Natural killer cell (primary cell): ENCODE measurements at regions of chr2 and their contacts with region 1.

Region 1: DNA sequence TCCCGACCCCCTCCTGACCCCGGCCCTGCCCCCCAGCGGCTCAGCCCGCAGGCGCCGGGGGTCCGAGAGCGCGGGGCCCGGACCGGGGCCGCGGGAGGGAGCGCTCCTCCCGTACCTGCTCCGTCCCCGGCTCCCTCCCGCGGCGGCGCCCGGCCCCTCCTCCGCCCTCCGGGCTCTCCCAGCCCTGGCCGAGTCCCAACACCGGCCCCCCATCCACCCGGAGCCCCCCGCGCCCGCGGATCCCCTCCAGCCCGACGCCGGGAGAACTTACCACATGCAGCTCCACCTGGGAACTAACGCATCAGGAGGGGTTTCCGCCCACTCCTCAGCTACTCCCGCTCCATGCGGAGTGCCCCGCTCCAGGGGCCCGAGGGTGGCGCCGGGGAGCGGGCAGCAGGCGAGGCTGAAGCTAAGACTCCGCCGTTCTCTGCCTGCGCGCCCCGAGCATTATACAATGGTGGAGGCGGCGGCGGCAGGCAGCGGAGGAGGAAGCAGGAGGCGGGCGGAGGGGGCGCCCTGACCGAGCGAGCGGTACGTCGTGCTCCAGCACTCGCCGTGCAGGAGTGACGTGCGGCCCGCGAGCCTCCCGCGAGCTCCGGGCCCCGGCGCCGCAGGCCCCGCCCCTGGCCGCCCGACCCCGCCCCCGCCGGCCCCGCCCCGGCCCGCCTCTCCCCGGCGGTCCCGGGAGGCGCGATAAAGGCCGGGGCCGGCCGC is at the start of gene SERTAD2:
- DNase-seq: peak; percentile 80 to 94
- ATAC-seq: peak; percentile 81 to 93 (median 87)
- H3K4me3 ChIP-seq: peak within 1 kb of the TSS; percentile 99
- H3K4me3 Mint-ChIP-seq: peak within 1 kb of the TSS; percentile 93
- H3K27ac ChIP-seq: peak within 1 kb of the TSS; percentile 98
- H3K27ac Mint-ChIP-seq: peak within 1 kb of the TSS; percentile 85 to 87
- H3K4me1 ChIP-seq: peaks cover 28% of the 10 kb centered on the region
- H3K4me1 Mint-ChIP-seq: peaks cover 34 to 40% of the 10 kb centered on the region in 2 donors
- H3K27me3 ChIP-seq: no peaks in the 10 kb centered on the region
- H3K27me3 Mint-ChIP-seq: no peaks in the 10 kb centered on the region
- CTCF ChIP-seq: no peak
- total RNA-seq, gene SERTAD2: 45.6 to 71.2 (median 55.8) TPM

Region 2: GRCh38 chr2:64354857-64355680 is 298.4 kb before region 1 on chr2:
- intact Hi-C with region 1: no loop called
- DNase-seq: no peak
- ATAC-seq: no peak
- H3K4me3 ChIP-seq: no peak overlapping the region
- H3K4me3 Mint-ChIP-seq: no peak overlapping the region
- H3K27ac ChIP-seq: no peak overlapping the region
- H3K27ac Mint-ChIP-seq: no peak overlapping the region
- H3K4me1 ChIP-seq: no peaks in the 10 kb centered on the region
- H3K4me1 Mint-ChIP-seq: no peaks in the 10 kb centered on the region
- H3K27me3 ChIP-seq: peaks cover 3% of the 10 kb centered on the region
- H3K27me3 Mint-ChIP-seq: peaks cover 23 to 41% of the 10 kb centered on the region in 2 donors
- CTCF ChIP-seq: no peak

Region 3: GRCh38 chr2:64609227-64609941 is 44.1 kb before region 1 on chr2:
- intact Hi-C with region 1: loop called (anchors 2 kb)
- DNase-seq: peak; percentile 80 to 86
- ATAC-seq: peak; percentile 75 to 86 (median 77)
- H3K4me3 ChIP-seq: peak overlapping the region; percentile 60
- H3K4me3 Mint-ChIP-seq: peak overlapping the region; percentile 85
- H3K27ac ChIP-seq: peak overlapping the region; percentile 69
- H3K27ac Mint-ChIP-seq: peak overlapping the region; percentile 77 to 89
- H3K4me1 ChIP-seq: peaks cover 35% of the 10 kb centered on the region
- H3K4me1 Mint-ChIP-seq: peaks cover 19 to 28% of the 10 kb centered on the region in 2 donors
- H3K27me3 ChIP-seq: no peaks in the 10 kb centered on the region
- H3K27me3 Mint-ChIP-seq: no peaks in the 10 kb centered on the region
- CTCF ChIP-seq: peak; percentile 34